Activated naive CD4-positive, alpha-beta T cell treated with anti-CD3 and anti-CD28 coated beads for 36 hours (primary cell): ENCODE measurements at regions of chr16 and their contacts with region 1.

Region 1: DNA sequence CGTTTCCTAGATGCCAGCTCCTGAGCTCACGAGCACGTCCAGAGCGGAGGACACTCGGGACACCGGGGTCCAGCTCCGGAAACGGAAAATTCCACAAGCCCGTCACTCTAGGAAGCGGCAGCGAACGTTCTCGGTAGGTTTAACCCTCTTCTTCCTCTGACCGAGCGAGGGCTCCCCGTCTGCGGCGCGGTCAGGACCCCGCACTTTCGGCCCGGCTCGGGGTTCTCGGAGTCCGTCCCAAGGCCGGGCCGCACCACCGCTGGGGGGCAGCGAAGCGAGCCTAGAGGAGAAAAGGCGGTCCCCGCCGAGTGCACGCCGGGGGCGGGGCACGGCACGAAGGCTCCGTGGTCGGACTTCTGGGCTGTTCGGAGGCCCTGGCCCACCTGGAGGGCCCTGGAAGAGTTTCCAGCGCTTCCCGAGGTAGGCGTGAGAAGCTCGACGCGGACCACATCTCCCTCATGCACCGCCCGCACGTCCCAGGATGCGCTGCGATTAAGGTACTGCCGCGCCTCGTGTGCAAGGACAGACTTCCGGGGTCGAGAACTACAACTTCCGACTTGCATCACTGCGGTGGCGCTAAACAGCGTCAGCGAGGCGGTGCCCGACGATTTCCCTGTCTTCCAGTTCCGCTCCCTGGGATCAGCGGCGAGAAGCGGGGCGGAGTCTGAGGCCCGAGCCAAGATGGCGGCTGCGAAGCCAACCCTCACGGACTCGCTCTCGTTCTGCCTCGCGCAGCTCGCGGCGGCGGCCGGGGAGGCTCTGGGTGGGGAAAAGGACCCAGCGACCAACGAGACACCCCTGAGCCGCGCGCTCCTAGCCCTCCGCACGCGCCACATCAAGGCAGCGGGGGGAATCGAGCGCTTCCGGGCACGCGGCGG is at the start of gene ARMC5:
- DNase-seq: peak; percentile 99
- H3K4me3 Mint-ChIP-seq: peak within 1 kb of the TSS; percentile 87
- H3K27ac Mint-ChIP-seq: peak within 1 kb of the TSS; percentile 94
- H3K4me1 Mint-ChIP-seq: peaks cover 41% of the 10 kb centered on the region
- H3K27me3 Mint-ChIP-seq: no peaks in the 10 kb centered on the region
- total RNA-seq, gene ARMC5: 6.3 to 6.7 TPM

Region 2: DNA sequence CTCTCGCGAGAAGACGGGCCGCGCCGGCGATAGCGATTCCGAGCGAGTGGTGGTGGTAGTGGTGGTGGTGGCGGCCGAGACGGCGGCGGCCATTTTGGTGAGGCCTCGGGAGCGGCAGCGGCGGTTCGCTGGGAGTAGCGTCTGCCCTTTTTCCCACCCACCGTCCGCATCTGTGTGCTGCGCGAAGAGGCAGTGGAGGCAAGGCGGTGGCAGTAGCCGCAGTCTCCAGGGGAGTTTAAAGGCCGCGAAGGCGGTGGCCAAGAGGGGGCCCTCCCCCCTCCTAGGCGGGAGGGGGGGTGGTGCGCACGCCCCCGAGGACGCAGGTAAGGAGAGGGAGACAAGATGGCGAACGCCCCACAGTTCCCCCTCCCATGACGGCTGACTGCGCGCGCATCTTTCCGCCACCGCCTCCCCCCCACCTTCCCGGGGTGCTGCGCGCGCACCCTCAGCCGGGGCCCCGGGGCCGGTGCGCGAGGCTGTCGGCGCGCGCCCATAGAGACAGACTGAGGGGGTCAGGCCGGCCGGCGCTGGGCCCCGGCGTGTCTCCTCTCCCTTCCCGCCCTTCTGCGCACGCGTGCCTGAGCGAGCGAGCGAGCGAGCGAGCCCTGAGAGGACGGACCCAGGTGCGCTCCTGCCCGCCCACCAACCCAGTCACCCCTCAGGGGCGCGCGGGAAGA is 760.8 kb before region 1 on chr16:
- CTCF ChIA-PET with region 1: no interaction called
- intact Hi-C with region 1: loop called (anchors 1 kb)
- DNase-seq: peak; percentile 100
- H3K4me3 Mint-ChIP-seq: peak overlapping the region; percentile 94
- H3K27ac Mint-ChIP-seq: peak overlapping the region; percentile 99
- H3K4me1 Mint-ChIP-seq: peaks cover 37% of the 10 kb centered on the region
- H3K27me3 Mint-ChIP-seq: no peaks in the 10 kb centered on the region

Region 3: DNA sequence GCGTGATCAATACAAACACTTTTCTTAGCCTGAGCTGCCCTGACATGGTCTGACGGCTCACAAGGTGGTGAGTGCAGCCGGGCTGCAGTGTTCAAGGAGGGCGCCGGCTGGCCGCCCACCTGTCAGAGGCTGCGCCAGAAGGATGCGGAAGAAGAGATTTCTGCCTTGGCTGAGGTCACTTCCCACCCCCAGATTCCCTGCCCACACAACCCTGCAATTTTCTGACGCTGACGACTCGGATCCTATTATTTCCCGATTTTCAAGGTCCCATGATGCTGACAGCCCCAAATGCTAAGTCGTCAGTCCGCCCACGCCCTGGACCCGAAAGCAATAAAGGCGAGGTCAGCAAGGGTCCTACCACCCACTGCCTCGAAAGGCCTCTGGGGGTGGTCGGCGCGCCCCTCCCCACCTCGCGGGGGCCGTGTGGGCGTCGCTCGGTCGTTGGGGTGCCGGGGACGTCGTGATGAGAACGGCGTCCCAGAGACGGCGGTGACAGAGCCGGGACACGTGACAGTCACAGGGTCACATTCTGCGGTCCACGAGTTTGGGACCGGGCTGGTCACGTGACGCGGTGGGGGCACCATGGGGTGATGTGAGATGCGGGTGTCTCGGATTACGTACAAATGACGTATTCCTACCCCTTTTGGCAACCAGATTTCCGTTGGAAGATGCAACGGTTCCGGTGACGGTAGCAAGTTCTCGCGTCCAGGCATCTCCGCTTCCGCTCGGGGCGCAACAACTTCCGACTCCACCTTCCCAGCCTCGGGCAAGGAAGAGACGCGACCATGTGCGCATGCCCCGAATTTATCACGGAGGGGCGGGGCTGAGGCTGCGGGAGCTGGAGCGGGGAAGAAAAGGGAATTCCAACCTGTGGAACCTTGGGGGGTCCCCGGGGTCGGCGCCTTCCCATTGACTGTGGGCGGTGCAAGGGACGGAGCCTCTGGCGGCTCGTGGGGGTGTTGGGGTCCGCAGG is 426.1 kb before region 1 on chr16 and contains the start of gene STX4:
- CTCF ChIA-PET with region 1: no interaction called
- intact Hi-C with region 1: loop called (anchors 1 kb)
- DNase-seq: peak; percentile 99
- H3K4me3 Mint-ChIP-seq: peak within 1 kb of the TSS; percentile 96
- H3K27ac Mint-ChIP-seq: peak within 1 kb of the TSS; percentile 93
- H3K4me1 Mint-ChIP-seq: peaks cover 22% of the 10 kb centered on the region
- H3K27me3 Mint-ChIP-seq: no peaks in the 10 kb centered on the region
- total RNA-seq, gene STX4: 32.9 to 38.0 TPM

Region 4: GRCh38 chr16:31427441-31428278 is 31.4 kb before region 1 on chr16:
- CTCF ChIA-PET with region 1: interaction called, 3 read pairs
- intact Hi-C with region 1: loop called (anchors 1 kb)
- DNase-seq: peak; percentile 53
- H3K4me3 Mint-ChIP-seq: no peak overlapping the region
- H3K27ac Mint-ChIP-seq: no peak overlapping the region
- H3K4me1 Mint-ChIP-seq: peaks cover 6% of the 10 kb centered on the region
- H3K27me3 Mint-ChIP-seq: peaks cover 5% of the 10 kb centered on the region

Region 5: DNA sequence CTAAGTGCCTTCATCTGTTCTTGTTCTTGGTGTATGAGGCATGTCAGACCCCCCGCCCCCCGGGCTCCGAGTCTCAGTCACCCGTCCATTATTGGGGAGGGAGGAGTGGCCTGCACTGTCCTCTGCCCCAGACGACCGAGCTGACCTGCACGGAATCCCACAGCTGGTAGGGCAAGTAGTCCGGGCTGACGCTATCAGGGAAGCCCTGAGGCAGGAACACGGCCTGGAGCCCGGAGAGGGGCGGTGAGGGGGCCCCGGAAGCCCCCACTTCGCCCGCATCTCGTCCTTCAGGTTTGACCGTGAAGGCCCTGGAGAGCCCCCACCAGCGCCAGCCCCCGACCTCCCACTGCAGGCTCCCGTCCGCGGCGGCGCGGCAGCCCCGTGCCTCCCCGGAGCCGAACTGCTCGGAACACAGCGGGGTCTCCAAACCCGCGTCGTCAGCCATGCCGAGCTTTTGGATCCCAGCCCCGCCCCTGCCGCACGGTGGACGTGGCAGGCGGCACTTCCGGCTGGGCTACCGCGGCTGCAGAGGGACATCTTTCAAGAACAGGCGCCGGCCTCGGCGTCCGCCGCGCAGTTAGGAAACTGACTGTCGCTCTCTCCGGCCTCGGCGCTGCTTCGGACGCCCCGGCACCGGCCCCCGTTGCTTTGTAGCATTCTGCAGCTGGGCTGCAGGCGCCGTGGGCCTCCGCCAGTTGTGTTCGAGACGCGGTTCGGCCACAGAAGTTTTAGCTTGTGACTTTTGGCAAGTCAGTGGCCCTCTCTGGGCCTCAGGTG is 49.0 kb after region 1 on chr16 and contains the start of gene RUSF1:
- CTCF ChIA-PET with region 1: interaction called, 5 read pairs
- intact Hi-C with region 1: loop called (anchors 1 kb)
- DNase-seq: peak; percentile 91
- H3K4me3 Mint-ChIP-seq: peak within 1 kb of the TSS; percentile 92
- H3K27ac Mint-ChIP-seq: peak within 1 kb of the TSS; percentile 97
- H3K4me1 Mint-ChIP-seq: peaks cover 42% of the 10 kb centered on the region
- H3K27me3 Mint-ChIP-seq: no peaks in the 10 kb centered on the region
- total RNA-seq, gene RUSF1: 24.0 to 26.0 TPM

Region 6: GRCh38 chr16:31528523-31529397 is 69.7 kb after region 1 on chr16:
- CTCF ChIA-PET with region 1: no interaction called
- intact Hi-C with region 1: no loop called
- DNase-seq: no peak
- H3K4me3 Mint-ChIP-seq: peak overlapping the region; percentile 22
- H3K27ac Mint-ChIP-seq: no peak overlapping the region
- H3K4me1 Mint-ChIP-seq: peaks cover 21% of the 10 kb centered on the region
- H3K27me3 Mint-ChIP-seq: peaks cover 8% of the 10 kb centered on the region

Region 7: DNA sequence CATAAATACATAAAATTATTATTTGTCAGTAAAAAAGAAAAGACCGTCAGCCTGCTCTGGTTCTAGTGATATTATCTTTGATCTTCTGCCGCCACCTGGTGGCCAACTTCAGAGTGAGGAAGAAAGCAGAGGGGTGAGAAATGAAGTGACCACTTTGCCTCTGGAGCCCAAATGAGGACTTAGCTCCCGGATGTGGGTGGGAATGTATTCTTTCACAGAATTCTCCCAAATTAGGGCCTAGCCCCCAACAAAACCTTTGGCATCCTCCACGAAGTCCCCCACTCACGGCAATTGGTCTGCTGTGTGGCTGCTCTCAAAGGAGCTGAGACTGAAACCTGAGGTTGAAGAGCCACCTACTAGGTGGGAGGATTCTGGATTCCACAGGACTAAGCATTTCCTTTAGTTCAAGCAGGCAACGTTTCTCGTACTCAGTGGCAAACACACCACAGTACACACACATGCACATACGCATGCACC is 409.6 kb after region 1 on chr16:
- CTCF ChIA-PET with region 1: interaction called, 8 read pairs
- intact Hi-C with region 1: loop called (anchors 1 kb)
- DNase-seq: peak; percentile 90
- H3K4me3 Mint-ChIP-seq: peak overlapping the region; percentile 46
- H3K27ac Mint-ChIP-seq: peak overlapping the region; percentile 82
- H3K4me1 Mint-ChIP-seq: peaks cover 50% of the 10 kb centered on the region
- H3K27me3 Mint-ChIP-seq: no peaks in the 10 kb centered on the region